CD4-positive, alpha-beta T cell (primary cell): ENCODE measurements at regions of chr18 and their contacts with region 1.

Region 1: DNA sequence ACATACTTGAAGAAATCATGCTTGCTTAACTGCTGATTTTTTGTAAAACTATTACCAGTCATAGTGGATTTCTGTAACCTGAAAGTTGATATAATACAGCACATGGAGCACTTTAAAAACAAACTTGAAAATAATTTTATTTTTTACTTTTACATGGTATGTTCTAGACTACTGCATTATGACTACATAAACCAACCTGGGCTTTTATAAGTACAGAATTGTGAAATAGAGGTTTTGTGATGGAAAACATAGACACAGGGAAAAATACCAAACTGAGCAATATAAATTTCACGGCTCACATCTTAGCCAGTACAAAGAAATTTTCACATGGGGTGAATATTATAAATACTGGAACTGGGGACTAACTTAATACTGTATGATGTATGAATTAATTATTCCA is 59.3 kb upstream of the CTIF start:
- DNase-seq: no peak
- ATAC-seq: no peak
- H3K4me3 ChIP-seq: no peak overlapping the region
- H3K4me3 Mint-ChIP-seq: no peak overlapping the region
- H3K27ac ChIP-seq: no peak overlapping the region
- H3K27ac Mint-ChIP-seq: no peak overlapping the region
- H3K4me1 ChIP-seq: no peaks in the 10 kb centered on the region
- H3K4me1 Mint-ChIP-seq: no peaks in the 10 kb centered on the region
- H3K27me3 ChIP-seq: peaks cover 3% of the 10 kb centered on the region in 2 experiments
- H3K27me3 Mint-ChIP-seq: peaks cover 27% of the 10 kb centered on the region
- CTCF ChIP-seq: no peak

Region 2: GRCh38 chr18:48663931-48664847 is 184.7 kb after region 1 on chr18:
- CTCF ChIA-PET with region 1: interaction called, 6 read pairs
- POLR2A ChIA-PET with region 1: no interaction called
- intact Hi-C with region 1: loop called in 1 of 2 experiments (anchors 2 kb)
- DNase-seq: peak; percentile 24 to 61 (median 40)
- ATAC-seq: no peak
- H3K4me3 ChIP-seq: no peak overlapping the region
- H3K4me3 Mint-ChIP-seq: no peak overlapping the region
- H3K27ac ChIP-seq: no peak overlapping the region
- H3K27ac Mint-ChIP-seq: no peak overlapping the region
- H3K4me1 ChIP-seq: peaks cover 4% of the 10 kb centered on the region
- H3K4me1 Mint-ChIP-seq: no peaks in the 10 kb centered on the region
- H3K27me3 ChIP-seq: no peaks in the 10 kb centered on the region
- H3K27me3 Mint-ChIP-seq: peaks cover 3% of the 10 kb centered on the region
- CTCF ChIP-seq: peak; percentile 65